Activated CD4-positive, alpha-beta T cell treated with anti-CD3 and anti-CD28 coated beads for 36 hours (primary cell): ENCODE measurements at regions of chr20 and their contacts with region 1.

Region 1: GRCh38 chr20:41693136-41693979 is 75.2 kb upstream of the CHD6 start:
- DNase-seq: peak; percentile 88
- ATAC-seq: peak; percentile 90
- H3K4me3 Mint-ChIP-seq: peak overlapping the region; percentile 90
- H3K27ac Mint-ChIP-seq: peak overlapping the region; percentile 94
- H3K4me1 Mint-ChIP-seq: peaks cover 13% of the 10 kb centered on the region
- H3K27me3 Mint-ChIP-seq: peaks cover 2% of the 10 kb centered on the region

Region 2: GRCh38 chr20:41317536-41318270 is 375.7 kb before region 1 on chr20 and contains the start of gene ZHX3:
- CTCF ChIA-PET with region 1: no interaction called
- POLR2A ChIA-PET with region 1: no interaction called
- intact Hi-C with region 1: loop called in 1 of 2 experiments (anchors 1 kb)
- DNase-seq: peak; percentile 98
- ATAC-seq: peak; percentile 99
- H3K4me3 Mint-ChIP-seq: peak within 1 kb of the TSS; percentile 84
- H3K27ac Mint-ChIP-seq: peak within 1 kb of the TSS; percentile 66
- H3K4me1 Mint-ChIP-seq: peaks cover 31% of the 10 kb centered on the region
- H3K27me3 Mint-ChIP-seq: no peaks in the 10 kb centered on the region
- total RNA-seq, gene ZHX3: 12.8 to 15.4 TPM

Region 3: GRCh38 chr20:41428285-41428684 is 265.1 kb before region 1 on chr20:
- CTCF ChIA-PET with region 1: interaction called, 3 read pairs
- POLR2A ChIA-PET with region 1: no interaction called
- intact Hi-C with region 1: loop called (anchors 2 to 10 kb)
- DNase-seq: peak; percentile 64
- ATAC-seq: peak; percentile 88
- H3K4me3 Mint-ChIP-seq: peak overlapping the region; percentile 8
- H3K27ac Mint-ChIP-seq: peak overlapping the region; percentile 92
- H3K4me1 Mint-ChIP-seq: peaks cover 65% of the 10 kb centered on the region
- H3K27me3 Mint-ChIP-seq: no peaks in the 10 kb centered on the region

Region 4: DNA sequence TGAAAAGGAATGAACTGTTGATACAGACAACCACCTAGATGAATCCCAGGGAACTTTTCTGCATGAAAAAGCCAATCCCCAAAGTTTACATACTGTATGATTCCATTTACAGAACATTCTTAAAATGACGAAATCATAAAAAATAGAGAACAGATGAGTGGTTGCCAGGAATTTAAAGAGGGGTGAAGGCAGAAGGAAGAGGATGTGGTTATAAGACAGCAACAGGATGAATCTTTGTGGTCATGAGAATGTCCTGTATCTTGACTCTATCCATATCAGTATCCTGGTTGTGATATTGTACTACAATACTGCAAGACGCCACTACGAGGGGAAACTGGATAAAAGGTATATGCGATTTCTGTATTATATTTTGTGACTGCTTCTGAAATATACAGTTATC is 256.7 kb before region 1 on chr20:
- CTCF ChIA-PET with region 1: interaction called, 6 read pairs
- POLR2A ChIA-PET with region 1: no interaction called
- intact Hi-C with region 1: loop called in 1 of 2 experiments (anchors 10 kb)
- DNase-seq: no peak
- ATAC-seq: peak; percentile 69
- H3K4me3 Mint-ChIP-seq: no peak overlapping the region
- H3K27ac Mint-ChIP-seq: peak overlapping the region; percentile 47
- H3K4me1 Mint-ChIP-seq: peaks cover 79% of the 10 kb centered on the region
- H3K27me3 Mint-ChIP-seq: no peaks in the 10 kb centered on the region